Gastrocnemius medialis (tissue), 4 donors: ENCODE measurements at regions of chr19 and their contacts with region 1.

Region 1: DNA sequence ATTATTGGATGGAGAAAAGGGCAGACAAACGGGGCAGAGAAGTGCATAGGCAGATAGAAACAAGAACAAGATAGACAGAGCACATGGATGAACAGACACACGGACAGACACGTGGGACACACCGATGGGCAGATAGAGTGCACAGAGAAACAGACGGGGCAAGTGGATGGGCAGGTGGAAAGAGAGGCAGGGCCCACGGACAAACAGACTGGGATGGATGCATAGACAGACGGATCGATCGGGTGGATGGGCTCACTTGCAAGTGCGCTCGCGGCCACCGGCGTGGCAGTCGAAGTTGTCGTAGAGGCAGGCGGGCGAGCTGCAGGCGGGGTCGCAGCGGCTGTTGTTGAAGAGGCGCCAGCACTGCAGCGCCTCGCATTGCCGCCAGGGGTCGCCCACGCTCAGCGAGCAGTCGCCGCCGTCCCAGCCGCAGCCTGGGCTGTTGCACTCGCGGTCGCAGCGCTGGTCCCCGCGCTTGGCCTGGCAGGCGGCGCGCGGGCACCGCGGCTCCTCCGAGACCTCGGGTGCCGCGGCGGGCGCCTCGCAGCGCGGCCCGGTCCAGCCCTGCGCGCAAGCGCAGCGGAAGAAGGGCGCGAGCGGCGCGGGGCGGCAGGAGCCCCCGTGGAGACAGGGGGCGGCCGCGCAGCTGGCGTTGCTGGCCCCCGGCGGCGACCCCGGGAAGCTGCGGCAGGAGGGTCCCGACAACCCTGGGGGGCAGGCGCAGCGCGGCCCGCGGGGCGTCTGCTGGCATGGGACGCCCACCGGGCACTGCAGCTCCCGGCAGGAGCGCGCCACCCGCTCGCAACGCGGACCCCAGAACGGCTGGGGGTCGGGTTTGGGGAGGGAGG is 23.3 kb downstream of the NOTCH3 start:
- DNase-seq: peak; percentile 48 to 61
- ATAC-seq: peak; percentile 89
- H3K4me3 ChIP-seq: no peak overlapping the region
- H3K27ac ChIP-seq: peak overlapping the region in 2 of 4 donors; percentile 5 to 31
- H3K4me1 ChIP-seq: peaks cover 0 to 4% of the 10 kb centered on the region in 2 donors
- H3K27me3 ChIP-seq: peaks cover 0 to 9% (median 2%) of the 10 kb centered on the region in 3 donors
- CTCF ChIP-seq: peak; percentile 93 to 99 (median 99)
- POLR2A ChIP-seq: no peak

Region 2: GRCh38 chr19:15251749-15252397 is 74.4 kb after region 1 on chr19:
- in situ Hi-C with region 1: no loop called
- intact Hi-C with region 1: loop called (anchors 5 kb)
- DNase-seq: peak; percentile 79 to 95
- ATAC-seq: peak; percentile 73 to 77
- H3K4me3 ChIP-seq: peak overlapping the region in 3 of 4 donors; percentile 24 to 45 (median 34)
- H3K27ac ChIP-seq: peak overlapping the region; percentile 84 to 96 (median 90)
- H3K4me1 ChIP-seq: peaks cover 70 to 71% of the 10 kb centered on the region in 2 donors
- H3K27me3 ChIP-seq: no peaks in the 10 kb centered on the region
- CTCF ChIP-seq: peak; percentile 41 to 67 (median 54)
- POLR2A ChIP-seq: peak in 1 of 2 donors; percentile 25

Region 3: GRCh38 chr19:15264061-15264932 is 86.8 kb after region 1 on chr19:
- in situ Hi-C with region 1: loop called in 1 of 4 experiments (anchors 10 kb)
- intact Hi-C with region 1: no loop called
- DNase-seq: peak in 1 of 2 donors; percentile 65
- ATAC-seq: peak; percentile 14 to 31
- H3K4me3 ChIP-seq: no peak overlapping the region
- H3K27ac ChIP-seq: peak overlapping the region; percentile 61 to 80 (median 68)
- H3K4me1 ChIP-seq: peaks cover 50 to 54% of the 10 kb centered on the region in 2 donors
- H3K27me3 ChIP-seq: no peaks in the 10 kb centered on the region
- CTCF ChIP-seq: peak; percentile 68 to 88 (median 78)
- POLR2A ChIP-seq: no peak